ENCODE measurements at regions of chr10 and their contacts with region 1.

Region 1: GRCh38 chr10:52951824-52952223 is 179.2 kb upstream of the MBL2 start:
- DNase-seq: no peak
- ATAC-seq: peak; percentile 98
- H3K4me3 ChIP-seq: no peak overlapping the region
- H3K27ac ChIP-seq: no peak overlapping the region
- H3K4me1 ChIP-seq: no peaks in the 10 kb centered on the region
- H3K27me3 ChIP-seq: no peaks in the 10 kb centered on the region
- CTCF ChIP-seq: peak; percentile 70 to 75 (median 70)
- EP300 ChIP-seq: no peak
- POLR2A ChIP-seq: no peak
- RAD21 ChIP-seq: peak; percentile 88

Region 2: DNA sequence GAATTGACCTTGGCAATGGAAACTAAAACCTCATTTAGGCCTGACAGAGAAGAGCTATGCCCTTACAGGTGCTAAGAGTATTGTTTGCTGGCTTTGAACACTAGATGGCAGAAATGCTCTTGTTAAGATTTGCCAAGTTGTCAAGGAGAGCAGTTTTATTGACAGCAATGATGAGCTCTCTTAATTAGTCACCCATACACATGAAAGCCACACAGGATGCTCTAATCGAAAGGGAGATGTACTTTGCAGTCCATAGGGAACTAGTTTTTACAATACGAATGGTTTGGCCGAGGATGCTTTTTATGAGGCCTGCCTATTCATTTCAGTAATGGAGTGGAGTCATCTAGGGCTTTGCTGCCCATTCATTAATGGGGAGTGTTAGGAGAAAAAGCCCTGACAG is 133.8 kb before region 1 on chr10:
- CTCF ChIA-PET with region 1: interaction called, 13 read pairs
- POLR2A ChIA-PET with region 1: no interaction called
- RAD21 ChIA-PET with region 1: interaction called, 3 read pairs
- SMC1A ChIA-PET with region 1: interaction called, 6 read pairs
- in situ Hi-C with region 1: no loop called
- intact Hi-C with region 1: loop called (anchors 5 kb)
- DNase-seq: peak; percentile 37
- ATAC-seq: peak; percentile 96
- H3K4me3 ChIP-seq: no peak overlapping the region
- H3K27ac ChIP-seq: no peak overlapping the region
- H3K4me1 ChIP-seq: no peaks in the 10 kb centered on the region
- H3K27me3 ChIP-seq: no peaks in the 10 kb centered on the region; a peak in 1 of 4 replicates
- CTCF ChIP-seq: peak; percentile 57 to 71 (median 68); a peak in 5 of 6 replicates
- EP300 ChIP-seq: no peak
- POLR2A ChIP-seq: no peak
- RAD21 ChIP-seq: peak; percentile 56

Region 3: GRCh38 chr10:52895059-52895458 is 56.8 kb before region 1 on chr10:
- CTCF ChIA-PET with region 1: no interaction called
- POLR2A ChIA-PET with region 1: no interaction called
- RAD21 ChIA-PET with region 1: no interaction called
- SMC1A ChIA-PET with region 1: no interaction called
- in situ Hi-C with region 1: no loop called
- intact Hi-C with region 1: no loop called
- DNase-seq: no peak
- ATAC-seq: no peak
- H3K4me3 ChIP-seq: no peak overlapping the region
- H3K27ac ChIP-seq: no peak overlapping the region
- H3K4me1 ChIP-seq: no peaks in the 10 kb centered on the region; the same call in 1 of the 2 replicates
- H3K27me3 ChIP-seq: no peaks in the 10 kb centered on the region; a peak in 1 of 4 replicates
- CTCF ChIP-seq: no peak
- EP300 ChIP-seq: no peak
- POLR2A ChIP-seq: no peak
- RAD21 ChIP-seq: no peak

Region 4: DNA sequence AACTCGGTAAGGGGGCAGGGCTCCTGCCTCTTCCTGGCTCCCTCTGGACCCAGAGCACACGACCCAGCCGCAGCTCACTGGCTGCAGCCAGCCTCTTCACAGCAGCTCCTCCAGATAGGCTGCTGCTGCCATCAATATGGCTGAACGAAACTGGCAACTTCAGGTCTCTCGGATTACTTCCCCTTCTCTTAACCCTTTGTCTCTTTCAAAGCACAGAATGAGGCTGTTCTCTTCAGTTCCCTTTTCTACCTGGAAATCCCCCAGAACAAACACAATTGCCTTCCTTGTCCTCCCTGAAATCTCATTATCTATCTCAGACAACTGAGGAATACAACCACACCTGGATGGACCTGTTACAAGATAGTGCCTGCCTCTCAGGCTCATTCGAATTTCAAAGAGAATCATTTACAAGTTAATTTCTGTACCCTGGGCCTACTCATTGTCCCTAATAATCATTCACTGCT is 14.1 kb after region 1 on chr10:
- CTCF ChIA-PET with region 1: interaction called, 22 read pairs
- POLR2A ChIA-PET with region 1: interaction called, 3 read pairs
- RAD21 ChIA-PET with region 1: interaction called, 21 read pairs
- SMC1A ChIA-PET with region 1: interaction called, 29 read pairs
- in situ Hi-C with region 1: no loop called
- intact Hi-C with region 1: no loop called
- DNase-seq: peak; percentile 92
- ATAC-seq: peak; percentile 96
- H3K4me3 ChIP-seq: no peak overlapping the region
- H3K27ac ChIP-seq: peak overlapping the region; percentile 84
- H3K4me1 ChIP-seq: peaks cover 31% of the 10 kb centered on the region
- H3K27me3 ChIP-seq: no peaks in the 10 kb centered on the region
- CTCF ChIP-seq: no peak
- EP300 ChIP-seq: peak; percentile 85 to 96; a peak in 3 of 4 replicates
- POLR2A ChIP-seq: 0 out of 2 replicates have a peak, but pooled peaks have one; percentile 50
- RAD21 ChIP-seq: no peak

Region 5: DNA sequence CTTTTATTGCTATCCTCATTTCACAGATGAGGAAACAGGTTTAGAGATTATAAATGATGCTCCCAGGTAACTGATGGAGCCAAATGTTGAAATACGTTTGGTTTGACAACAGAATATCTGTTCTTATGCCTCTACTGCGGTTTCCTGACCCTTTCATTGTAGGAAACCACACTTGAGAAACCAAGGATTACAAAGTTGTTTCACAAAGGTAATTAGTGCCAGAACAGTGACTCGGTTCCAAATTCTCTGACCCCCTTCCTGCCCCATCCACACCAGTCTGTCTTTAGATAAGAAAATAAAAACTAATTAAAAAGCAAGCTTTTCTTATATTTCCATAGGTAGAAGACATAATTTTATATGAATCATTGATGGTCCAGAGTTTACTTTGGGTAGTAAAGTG is 214.5 kb after region 1 on chr10:
- CTCF ChIA-PET with region 1: no interaction called
- POLR2A ChIA-PET with region 1: no interaction called
- RAD21 ChIA-PET with region 1: interaction called, 3 read pairs
- SMC1A ChIA-PET with region 1: interaction called, 10 read pairs
- in situ Hi-C with region 1: no loop called
- intact Hi-C with region 1: no loop called
- DNase-seq: peak; percentile 5
- ATAC-seq: peak; percentile 85
- H3K4me3 ChIP-seq: no peak overlapping the region
- H3K27ac ChIP-seq: no peak overlapping the region
- H3K4me1 ChIP-seq: no peaks in the 10 kb centered on the region
- H3K27me3 ChIP-seq: no peaks in the 10 kb centered on the region
- CTCF ChIP-seq: no peak
- EP300 ChIP-seq: 0 out of 4 replicates have a peak, but pooled peaks of 1 of the 2 experiments have one; percentile 9
- POLR2A ChIP-seq: no peak
- RAD21 ChIP-seq: no peak

Region 6: DNA sequence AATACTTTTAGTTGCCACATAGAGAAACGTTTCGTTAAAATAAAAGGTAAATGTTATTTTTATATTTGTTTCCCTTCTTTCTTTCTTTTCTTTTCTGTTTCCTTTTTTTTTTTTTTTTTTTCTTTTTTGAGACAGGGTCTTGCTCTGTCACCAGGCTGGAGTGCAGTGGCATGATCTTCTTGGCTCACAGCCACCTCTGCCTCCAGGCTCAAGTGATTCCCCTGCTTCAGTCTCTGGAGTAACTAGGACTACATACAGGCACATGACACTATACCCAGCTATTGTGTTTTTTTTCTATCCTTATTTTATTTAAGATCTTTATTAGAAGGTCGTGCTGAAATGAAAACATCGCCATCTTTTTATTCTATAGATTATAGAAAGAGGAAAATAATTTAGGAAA is 482.6 kb after region 1 on chr10:
- CTCF ChIA-PET with region 1: interaction called, 4 read pairs
- POLR2A ChIA-PET with region 1: no interaction called
- RAD21 ChIA-PET with region 1: no interaction called
- SMC1A ChIA-PET with region 1: no interaction called
- in situ Hi-C with region 1: no loop called
- intact Hi-C with region 1: loop called (anchors 10 kb)
- DNase-seq: no peak
- ATAC-seq: no peak
- H3K4me3 ChIP-seq: no peak overlapping the region
- H3K27ac ChIP-seq: no peak overlapping the region
- H3K4me1 ChIP-seq: no peaks in the 10 kb centered on the region
- H3K27me3 ChIP-seq: no peaks in the 10 kb centered on the region
- CTCF ChIP-seq: no peak
- EP300 ChIP-seq: no peak
- POLR2A ChIP-seq: no peak
- RAD21 ChIP-seq: no peak